ENCODE measurements at regions of chr7 and their contacts with region 1.

Region 1: DNA sequence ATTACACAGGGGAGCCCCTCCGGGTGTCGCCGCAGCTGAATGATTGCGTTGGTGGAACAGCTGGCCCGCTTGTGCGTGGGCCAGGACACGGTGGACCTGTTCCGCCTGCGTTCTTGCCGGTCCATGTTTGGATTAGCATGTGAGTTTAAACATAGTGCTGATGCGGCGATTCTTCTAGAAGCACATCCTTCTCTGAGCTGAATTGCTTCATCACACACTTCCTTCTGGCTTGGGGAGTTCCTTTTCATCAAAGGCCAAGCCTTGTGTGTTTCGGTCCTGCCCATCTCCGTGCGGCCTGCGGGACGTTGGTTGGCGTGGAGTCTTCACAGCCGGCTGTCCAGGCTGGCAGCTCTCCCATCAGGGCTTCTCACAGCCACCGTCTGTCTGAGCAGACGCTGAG is 45.5 kb upstream of the SLC29A4 start:
- DNase-seq: no peak
- ATAC-seq: no peak
- H3K4me3 ChIP-seq: no peak overlapping the region
- H3K27ac ChIP-seq: no peak overlapping the region
- H3K4me1 ChIP-seq: peaks cover 9 to 32% of the 10 kb centered on the region in 2 experiments
- H3K27me3 ChIP-seq: no peaks in the 10 kb centered on the region
- CTCF ChIP-seq: no peak
- POLR2A ChIP-seq: no peak
- RAD21 ChIP-seq: no peak

Region 2: DNA sequence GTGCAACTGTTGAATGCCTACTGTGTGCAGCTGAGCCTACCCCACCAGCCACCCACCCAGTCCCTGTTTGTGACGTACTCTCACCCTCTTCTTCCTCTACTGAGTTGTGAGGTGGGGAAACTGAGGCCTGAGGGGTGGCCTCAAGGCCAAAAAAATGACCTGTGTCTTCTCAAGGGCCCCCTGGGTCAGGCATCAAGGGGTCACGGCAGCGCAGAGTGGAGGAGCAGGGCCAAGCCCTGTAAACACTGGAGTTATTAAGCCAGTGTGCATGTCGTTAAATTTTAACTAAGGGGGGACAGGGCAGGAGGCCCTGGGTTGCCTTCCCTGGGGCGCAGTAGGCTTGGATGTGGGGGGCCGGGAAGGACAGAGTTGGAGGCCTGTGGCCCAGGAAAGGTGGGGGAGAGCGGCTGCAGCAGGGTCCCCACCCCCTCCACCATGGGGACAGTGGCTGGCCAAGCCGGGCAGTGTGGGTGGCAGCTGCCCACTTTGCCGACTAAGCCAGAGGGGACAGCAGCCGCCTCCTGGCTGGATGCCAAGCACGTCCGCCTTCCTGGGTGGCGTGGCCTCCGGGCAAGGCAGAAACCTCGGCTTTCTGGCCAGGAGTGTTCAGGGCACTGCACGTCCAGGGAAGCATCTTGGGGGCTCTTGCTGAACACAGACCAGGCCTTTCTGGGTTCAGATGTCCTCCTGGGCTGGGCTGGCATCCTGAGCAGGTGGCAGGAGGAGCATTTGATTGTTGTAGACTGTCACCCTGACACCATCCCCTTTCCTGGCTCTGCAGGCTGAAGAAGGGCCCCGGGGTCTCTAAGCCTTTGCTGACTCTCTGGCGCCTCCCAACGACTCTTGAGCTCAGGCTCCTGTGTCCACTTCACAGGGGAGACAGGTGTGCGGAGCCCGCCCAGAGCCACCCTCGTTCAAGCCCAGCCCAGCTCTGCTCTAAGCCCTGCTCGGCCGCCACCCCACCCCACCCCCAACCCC is 47.3 kb after region 1 on chr7:
- CTCF ChIA-PET with region 1: interaction called, 16 read pairs
- POLR2A ChIA-PET with region 1: no interaction called
- RAD21 ChIA-PET with region 1: interaction called, 3 to 8 read pairs
- intact Hi-C with region 1: loop called (anchors 1 kb)
- DNase-seq: peak; percentile 54
- ATAC-seq: peak; percentile 78
- H3K4me3 ChIP-seq: no peak overlapping the region
- H3K27ac ChIP-seq: peak overlapping the region; percentile 33; the same call in 1 of the 2 replicates
- H3K4me1 ChIP-seq: peaks cover 12 to 22% of the 10 kb centered on the region in 2 experiments
- H3K27me3 ChIP-seq: no peaks in the 10 kb centered on the region
- CTCF ChIP-seq: peak; percentile 32 to 58 (median 54); a peak in 4 of 6 replicates
- POLR2A ChIP-seq: no peak
- RAD21 ChIP-seq: peak; percentile 68

Region 3: GRCh38 chr7:5363729-5364128 is 126.4 kb after region 1 on chr7:
- CTCF ChIA-PET with region 1: interaction called, 8 read pairs
- POLR2A ChIA-PET with region 1: no interaction called
- RAD21 ChIA-PET with region 1: interaction called in 1 of 2 experiments, 13 read pairs
- intact Hi-C with region 1: loop called (anchors 10 kb)
- DNase-seq: no peak
- ATAC-seq: no peak
- H3K4me3 ChIP-seq: no peak overlapping the region
- H3K27ac ChIP-seq: no peak overlapping the region
- H3K4me1 ChIP-seq: peaks cover 0 to 6% of the 10 kb centered on the region in 2 experiments; a peak in 1 of 4 replicates
- H3K27me3 ChIP-seq: no peaks in the 10 kb centered on the region
- CTCF ChIP-seq: no peak
- POLR2A ChIP-seq: no peak
- RAD21 ChIP-seq: no peak

Region 4: GRCh38 chr7:5396999-5397663 is 159.8 kb after region 1 on chr7:
- CTCF ChIA-PET with region 1: interaction called, 11 read pairs
- POLR2A ChIA-PET with region 1: no interaction called
- RAD21 ChIA-PET with region 1: no interaction called
- intact Hi-C with region 1: no loop called
- DNase-seq: peak; percentile 86
- ATAC-seq: peak; percentile 84
- H3K4me3 ChIP-seq: peak overlapping the region; percentile 83 to 89
- H3K27ac ChIP-seq: peak overlapping the region; percentile 92
- H3K4me1 ChIP-seq: peaks cover 37 to 62% of the 10 kb centered on the region in 2 experiments
- H3K27me3 ChIP-seq: no peaks in the 10 kb centered on the region
- CTCF ChIP-seq: no peak
- POLR2A ChIP-seq: no peak
- RAD21 ChIP-seq: no peak

Region 5: DNA sequence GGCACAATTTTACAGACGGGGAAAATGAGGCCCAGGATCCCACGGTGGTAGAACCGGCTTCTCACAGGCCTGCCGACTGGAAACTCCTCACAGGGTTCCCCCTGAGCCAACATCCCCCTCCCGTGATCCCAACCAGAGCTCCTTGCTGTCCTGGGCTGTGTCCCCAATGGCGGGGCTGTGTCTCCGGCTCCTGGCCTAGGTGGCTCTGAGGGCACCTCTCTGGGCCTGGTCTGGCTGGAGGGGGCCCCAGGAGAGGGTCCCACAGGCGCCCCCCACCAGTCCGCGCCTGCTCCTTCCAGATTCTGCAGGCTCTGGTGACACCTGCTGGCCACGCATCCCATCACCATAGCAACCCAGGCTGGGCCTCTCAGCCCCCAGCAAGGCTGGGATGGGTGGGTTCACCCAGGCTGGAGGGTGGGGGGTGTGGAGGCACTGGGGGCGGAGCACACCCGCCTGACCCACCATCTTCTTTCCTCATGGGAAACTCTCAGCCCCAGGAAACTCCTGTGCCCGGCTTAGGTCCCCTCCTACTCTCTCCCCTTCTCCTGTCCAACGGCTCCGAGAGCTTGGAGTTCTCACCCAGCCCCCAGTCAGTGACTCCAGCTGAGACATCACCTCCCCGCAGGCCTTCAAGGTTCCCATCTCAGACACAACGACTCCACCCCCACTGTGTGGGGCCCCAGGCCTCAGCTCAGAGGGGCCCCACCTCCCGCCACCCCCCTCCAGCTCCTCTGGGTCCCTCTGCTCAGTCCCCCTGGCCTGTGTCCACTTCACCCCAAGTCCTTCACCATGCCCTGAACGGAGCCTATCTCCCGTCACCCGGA is 213.5 kb after region 1 on chr7:
- CTCF ChIA-PET with region 1: interaction called, 15 read pairs
- POLR2A ChIA-PET with region 1: no interaction called
- RAD21 ChIA-PET with region 1: interaction called, 5 to 11 read pairs
- intact Hi-C with region 1: loop called (anchors 2 kb)
- DNase-seq: no peak
- ATAC-seq: peak; percentile 83
- H3K4me3 ChIP-seq: no peak overlapping the region
- H3K27ac ChIP-seq: no peak overlapping the region
- H3K4me1 ChIP-seq: no peaks in the 10 kb centered on the region
- H3K27me3 ChIP-seq: no peaks in the 10 kb centered on the region
- CTCF ChIP-seq: peak; percentile 50 to 81 (median 66)
- POLR2A ChIP-seq: no peak
- RAD21 ChIP-seq: peak; percentile 90

Measured in HCT116 (cell line).